Posterior cingulate gyrus (tissue), 11 donors: ENCODE measurements at regions of chr5 and their contacts with region 1.

Region 1: DNA sequence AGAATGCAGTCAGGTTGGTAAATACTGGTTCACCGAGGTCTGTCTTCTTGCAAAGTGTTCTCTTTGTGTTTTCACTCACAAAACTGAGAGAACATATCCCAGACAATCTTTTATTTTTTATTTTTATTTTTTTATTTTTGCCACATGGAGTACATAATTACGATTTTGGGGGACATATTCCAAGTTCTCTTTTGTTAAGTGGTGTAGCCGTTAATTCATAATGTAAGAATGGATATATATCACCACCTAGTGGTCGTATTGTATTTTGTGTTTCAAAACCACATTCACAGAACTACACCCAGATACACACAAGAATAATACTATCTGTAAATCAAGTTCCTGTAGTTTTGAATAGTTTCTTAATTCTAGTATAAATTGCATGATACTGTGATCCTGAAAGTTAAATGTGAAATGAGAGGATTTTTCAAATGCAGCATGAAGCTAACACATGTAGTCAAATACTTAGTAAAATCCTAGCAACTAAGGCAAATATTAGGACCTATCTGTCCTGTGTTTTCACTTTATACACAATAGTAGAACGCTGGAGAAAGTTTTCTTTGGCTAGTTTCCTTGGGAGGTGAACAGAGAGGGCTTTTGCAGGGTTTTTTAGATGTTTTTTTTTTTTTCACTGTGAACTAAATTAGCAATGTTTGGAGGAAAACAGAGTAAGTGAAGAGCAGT is 92.7 kb downstream of the VCAN start:
- DNase-seq: no peak

Region 2: DNA sequence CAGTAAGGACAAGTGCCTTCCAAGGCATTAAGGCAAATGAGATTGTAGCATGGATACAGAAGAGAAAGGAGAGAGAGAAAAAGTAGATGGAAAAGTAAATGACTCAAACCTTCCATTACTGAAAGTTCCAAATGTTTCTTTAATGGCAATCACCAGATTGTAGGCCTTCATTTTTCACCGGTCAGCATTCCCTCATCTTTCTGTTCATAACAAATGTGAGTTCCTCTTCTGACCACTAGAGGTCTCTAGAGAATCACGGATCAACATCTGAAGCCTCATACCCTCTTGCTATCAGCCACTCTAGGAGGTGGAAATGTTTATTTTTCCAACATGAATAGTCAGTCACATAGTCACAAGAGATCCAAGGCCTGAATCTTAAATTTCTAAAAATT is 1212.5 kb before region 1 on chr5:
- intact Hi-C with region 1: loop called (anchors 2 kb)
- DNase-seq: no peak

Region 3: GRCh38 chr5:82641331-82642003 is 922.7 kb before region 1 on chr5:
- intact Hi-C with region 1: loop called (anchors 5 kb)
- DNase-seq: peak in 7 of 10 donors; percentile 13 to 86 (median 43)

Region 4: DNA sequence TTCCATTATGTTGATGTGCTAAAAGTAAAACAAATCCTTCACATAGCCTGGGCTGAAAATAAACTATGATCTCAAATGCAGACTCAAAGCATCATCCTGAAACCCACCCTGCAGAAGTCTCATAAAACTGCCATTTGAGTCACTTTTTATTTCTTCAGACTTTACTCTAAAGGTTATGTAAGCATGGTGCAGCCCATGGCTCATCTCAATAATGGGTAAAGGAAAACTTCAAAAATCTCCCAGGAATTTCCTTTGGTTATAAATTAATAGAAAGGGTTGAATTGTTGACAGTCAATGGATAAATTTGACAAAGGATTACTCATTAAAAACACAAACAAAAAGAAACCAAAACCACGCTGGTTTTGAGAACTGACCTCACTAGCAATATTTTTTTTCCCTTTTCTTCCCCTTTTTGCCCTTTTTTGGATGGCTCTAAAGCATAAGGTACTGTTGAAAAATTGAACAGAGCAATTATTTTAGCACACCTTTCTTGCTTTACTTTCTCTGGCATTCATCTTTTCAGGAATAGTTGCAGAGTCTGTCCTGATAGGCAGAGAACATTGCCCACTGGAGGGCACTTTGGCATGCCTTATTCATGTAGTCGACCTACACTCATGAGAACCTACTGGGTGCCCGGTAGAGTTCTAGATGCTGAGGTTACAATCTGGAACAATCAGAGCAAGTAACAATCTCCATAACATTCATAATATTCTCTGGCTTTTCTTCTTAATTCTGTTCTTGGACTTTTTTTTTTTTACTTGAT is 678.4 kb before region 1 on chr5:
- intact Hi-C with region 1: loop called (anchors 10 kb)
- DNase-seq: peak in 4 of 10 donors; percentile 3 to 53 (median 36)

Region 5: GRCh38 chr5:83430130-83431010 is 133.8 kb before region 1 on chr5:
- intact Hi-C with region 1: loop called (anchors 5 kb)
- DNase-seq: peak in 8 of 10 donors; percentile 23 to 92 (median 58)

Region 6: GRCh38 chr5:83473346-83474163 is 90.7 kb before region 1 on chr5:
- intact Hi-C with region 1: loop called (anchors 5 kb)
- DNase-seq: peak; percentile 63 to 97 (median 80)